Heart right ventricle (tissue), 16 donors: ENCODE measurements at regions of chr1 and their contacts with region 1.

Region 1: DNA sequence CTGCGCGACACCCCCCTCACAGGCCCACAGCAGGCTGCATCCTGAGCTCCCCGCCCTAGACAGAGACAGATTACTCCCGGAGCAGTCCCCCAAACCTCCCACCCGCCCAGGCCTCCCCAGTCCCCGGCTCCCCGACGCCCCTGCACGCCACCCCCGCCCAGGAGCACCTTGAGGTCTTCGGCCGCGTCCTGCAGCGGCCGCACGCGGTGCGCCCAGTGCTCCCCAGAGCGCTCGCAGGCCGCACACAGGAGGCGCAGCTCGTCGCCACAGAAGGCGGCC is 709 bp downstream of the TRIM11 start:
- DNase-seq: no peak
- ATAC-seq: peak in 4 of 8 donors; percentile 1 to 21 (median 14)
- H3K4me3 ChIP-seq: peak overlapping the region; percentile 71 to 100 (median 96)
- H3K27ac ChIP-seq: peak overlapping the region in 9 of 10 donors; percentile 78 to 96 (median 91)
- H3K4me1 ChIP-seq: peaks cover 6 to 48% (median 34%) of the 10 kb centered on the region in 9 donors
- H3K27me3 ChIP-seq: no peaks in the 10 kb centered on the region
- CTCF ChIP-seq: peak in 1 of 9 donors; percentile 8

Region 2: GRCh38 chr1:227987181-227987580 is 418.7 kb before region 1 on chr1:
- intact Hi-C with region 1: no loop called
- DNase-seq: no peak
- ATAC-seq: no peak
- H3K4me3 ChIP-seq: no peak overlapping the region
- H3K27ac ChIP-seq: no peak overlapping the region
- H3K4me1 ChIP-seq: no peaks in the 10 kb centered on the region
- H3K27me3 ChIP-seq: peaks cover 0 to 29% (median 8%) of the 10 kb centered on the region in 7 donors
- CTCF ChIP-seq: no peak

Region 3: GRCh38 chr1:228275739-228276421 is 130.0 kb before region 1 on chr1:
- intact Hi-C with region 1: loop called in 1 of 10 experiments (anchors 10 kb)
- DNase-seq: peak; percentile 85 to 91
- ATAC-seq: peak; percentile 7 to 90 (median 80)
- H3K4me3 ChIP-seq: peak overlapping the region; percentile 28 to 78 (median 66)
- H3K27ac ChIP-seq: peak overlapping the region; percentile 32 to 79 (median 58)
- H3K4me1 ChIP-seq: peaks cover 0 to 38% (median 13%) of the 10 kb centered on the region in 9 donors
- H3K27me3 ChIP-seq: no peaks in the 10 kb centered on the region
- CTCF ChIP-seq: no peak

Region 4: GRCh38 chr1:228340686-228341449 is 65.1 kb before region 1 on chr1:
- intact Hi-C with region 1: loop called in 1 of 10 experiments (anchors 10 kb)
- DNase-seq: peak in 1 of 2 donors; percentile 10
- ATAC-seq: peak in 1 of 8 donors; percentile 3
- H3K4me3 ChIP-seq: no peak overlapping the region
- H3K27ac ChIP-seq: no peak overlapping the region
- H3K4me1 ChIP-seq: peaks cover 0 to 22% (median 5%) of the 10 kb centered on the region in 9 donors
- H3K27me3 ChIP-seq: no peaks in the 10 kb centered on the region
- CTCF ChIP-seq: peak in 4 of 9 donors; percentile 17 to 30 (median 22)

Region 5: GRCh38 chr1:228471762-228472398 is 66.0 kb after region 1 on chr1:
- intact Hi-C with region 1: no loop called
- DNase-seq: no peak
- ATAC-seq: peak in 1 of 8 donors; percentile 39
- H3K4me3 ChIP-seq: no peak overlapping the region
- H3K27ac ChIP-seq: no peak overlapping the region
- H3K4me1 ChIP-seq: peaks cover 0 to 16% (median 0%) of the 10 kb centered on the region in 9 donors
- H3K27me3 ChIP-seq: peaks cover 7 to 67% (median 52%) of the 10 kb centered on the region in 7 donors
- CTCF ChIP-seq: peak in 7 of 9 donors; percentile 13 to 60 (median 35)

Region 6: GRCh38 chr1:228486596-228487335 is 80.8 kb after region 1 on chr1:
- intact Hi-C with region 1: loop called in 1 of 10 experiments (anchors 2 kb)
- DNase-seq: peak; percentile 72 to 84
- ATAC-seq: peak; percentile 85 to 94 (median 88)
- H3K4me3 ChIP-seq: peak overlapping the region; percentile 55 to 97 (median 82)
- H3K27ac ChIP-seq: peak overlapping the region; percentile 97 to 100 (median 100)
- H3K4me1 ChIP-seq: peaks cover 17 to 51% (median 40%) of the 10 kb centered on the region in 9 donors
- H3K27me3 ChIP-seq: no peaks in the 10 kb centered on the region
- CTCF ChIP-seq: no peak